IMR-90 (cell line): ENCODE measurements at regions of chr10 and their contacts with region 1.

Region 1: DNA sequence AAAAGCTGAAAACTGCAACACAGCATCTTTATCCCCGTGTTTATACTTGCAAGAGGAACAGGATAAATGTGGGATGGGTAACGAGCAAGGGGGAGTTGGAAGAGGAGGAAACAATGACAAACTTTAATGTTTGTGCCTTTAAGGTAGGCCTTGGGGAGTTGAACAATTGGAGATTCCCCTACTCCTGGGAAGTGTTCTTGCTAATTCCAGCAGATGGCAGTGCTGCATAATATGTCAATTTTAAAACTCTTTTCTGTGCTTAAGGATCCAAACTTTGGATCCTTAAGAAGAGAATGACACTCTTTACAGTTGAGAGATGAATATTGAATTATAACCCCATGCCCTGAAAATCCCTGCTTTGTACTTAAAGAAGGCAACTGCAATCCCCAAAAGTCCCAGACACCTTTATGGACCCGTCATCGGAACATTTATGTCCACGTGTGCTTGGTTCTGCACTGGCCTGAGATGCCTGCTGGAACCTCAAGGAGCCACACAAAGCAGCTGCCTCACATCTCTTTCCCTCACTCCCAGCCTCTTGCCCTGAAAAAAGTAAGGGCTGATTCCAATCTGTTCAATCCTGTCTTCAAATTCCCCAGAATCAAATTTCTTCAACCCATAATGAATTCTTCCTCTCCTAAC is 12.0 kb downstream of the IFIT5 start:
- DNase-seq: peak; percentile 75
- ATAC-seq: peak; percentile 77
- H3K4me3 ChIP-seq: no peak overlapping the region
- H3K27ac ChIP-seq: no peak overlapping the region
- H3K4me1 ChIP-seq: peaks cover 15% of the 10 kb centered on the region
- H3K27me3 ChIP-seq: no peaks in the 10 kb centered on the region
- CTCF ChIP-seq: peak; percentile 89
- POLR2A ChIP-seq: no peak
- RAD21 ChIP-seq: peak; percentile 92

Region 2: DNA sequence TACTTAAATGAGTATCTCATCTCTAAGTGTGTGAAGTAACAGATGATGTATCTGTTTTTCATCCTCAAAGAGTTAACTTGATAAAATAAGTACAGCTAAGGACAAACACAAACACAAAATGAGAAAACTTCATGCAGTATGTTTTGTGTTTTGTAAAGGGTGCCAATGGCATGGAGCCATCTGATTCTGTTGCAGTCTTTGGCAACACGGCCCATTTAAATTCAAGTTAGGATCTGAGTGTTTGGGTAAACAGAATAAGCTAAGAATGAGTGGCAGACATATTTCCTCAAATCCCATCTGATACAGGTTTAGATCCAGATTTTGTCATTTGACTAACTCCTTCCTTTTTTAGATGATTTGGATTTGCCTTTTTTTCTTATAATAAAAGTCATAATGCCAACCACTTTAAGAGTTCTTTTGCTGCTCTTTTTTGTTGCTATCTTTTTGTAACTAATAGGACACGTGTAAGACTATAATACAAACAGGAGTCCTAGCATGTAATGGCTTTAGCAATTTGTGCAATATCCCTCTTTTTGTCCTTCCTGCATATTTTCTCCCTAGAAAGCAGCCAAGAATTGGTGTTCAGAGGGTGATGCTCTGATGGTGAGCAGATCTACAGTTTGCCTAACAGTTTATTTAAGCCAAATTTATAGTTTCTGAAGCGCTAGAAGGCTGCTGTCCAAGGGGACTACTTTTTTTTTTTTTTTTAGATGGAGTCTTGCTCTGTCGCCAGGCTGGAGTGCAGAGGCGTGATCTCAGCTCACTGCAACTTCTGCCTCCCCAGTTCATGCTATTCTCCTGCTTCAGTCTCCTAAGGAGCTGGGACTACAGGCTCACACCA is 454.9 kb before region 1 on chr10:
- CTCF ChIA-PET with region 1: no interaction called
- POLR2A ChIA-PET with region 1: no interaction called
- dilution Hi-C with region 1: no loop called
- in situ Hi-C with region 1: no loop called
- intact Hi-C with region 1: no loop called
- DNase-seq: peak; percentile 28
- ATAC-seq: peak; percentile 38
- H3K4me3 ChIP-seq: no peak overlapping the region
- H3K27ac ChIP-seq: no peak overlapping the region
- H3K4me1 ChIP-seq: peaks cover 7% of the 10 kb centered on the region
- H3K27me3 ChIP-seq: no peaks in the 10 kb centered on the region
- CTCF ChIP-seq: no peak
- POLR2A ChIP-seq: no peak
- RAD21 ChIP-seq: no peak

Region 3: DNA sequence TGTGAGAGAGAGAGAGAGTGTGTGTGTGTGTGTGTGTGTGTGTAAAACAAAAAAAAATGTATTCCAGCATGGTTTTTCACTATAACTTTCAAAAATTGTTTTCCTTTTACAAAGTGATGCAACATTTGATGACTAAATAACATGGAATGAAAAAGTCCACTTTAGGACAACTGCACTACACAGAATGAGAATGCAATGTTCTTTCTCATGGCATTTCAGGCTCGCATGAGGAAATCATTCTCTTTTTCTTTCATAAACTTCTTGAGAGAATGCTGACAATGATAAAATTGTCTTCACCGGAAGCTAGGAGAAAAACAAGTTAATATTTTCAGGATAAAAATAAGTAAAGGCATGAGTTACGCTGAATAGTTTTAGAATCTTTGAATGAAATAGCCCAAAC is 55.3 kb after region 1 on chr10:
- CTCF ChIA-PET with region 1: interaction called, 4 read pairs
- POLR2A ChIA-PET with region 1: no interaction called
- dilution Hi-C with region 1: no loop called
- in situ Hi-C with region 1: no loop called
- intact Hi-C with region 1: loop called (anchors 2 kb)
- DNase-seq: peak; percentile 93
- ATAC-seq: peak; percentile 79
- H3K4me3 ChIP-seq: no peak overlapping the region
- H3K27ac ChIP-seq: peak overlapping the region; percentile 24; the same call in 1 of the 2 replicates
- H3K4me1 ChIP-seq: peaks cover 12% of the 10 kb centered on the region
- H3K27me3 ChIP-seq: no peaks in the 10 kb centered on the region
- CTCF ChIP-seq: no peak
- POLR2A ChIP-seq: no peak
- RAD21 ChIP-seq: no peak

Region 4: DNA sequence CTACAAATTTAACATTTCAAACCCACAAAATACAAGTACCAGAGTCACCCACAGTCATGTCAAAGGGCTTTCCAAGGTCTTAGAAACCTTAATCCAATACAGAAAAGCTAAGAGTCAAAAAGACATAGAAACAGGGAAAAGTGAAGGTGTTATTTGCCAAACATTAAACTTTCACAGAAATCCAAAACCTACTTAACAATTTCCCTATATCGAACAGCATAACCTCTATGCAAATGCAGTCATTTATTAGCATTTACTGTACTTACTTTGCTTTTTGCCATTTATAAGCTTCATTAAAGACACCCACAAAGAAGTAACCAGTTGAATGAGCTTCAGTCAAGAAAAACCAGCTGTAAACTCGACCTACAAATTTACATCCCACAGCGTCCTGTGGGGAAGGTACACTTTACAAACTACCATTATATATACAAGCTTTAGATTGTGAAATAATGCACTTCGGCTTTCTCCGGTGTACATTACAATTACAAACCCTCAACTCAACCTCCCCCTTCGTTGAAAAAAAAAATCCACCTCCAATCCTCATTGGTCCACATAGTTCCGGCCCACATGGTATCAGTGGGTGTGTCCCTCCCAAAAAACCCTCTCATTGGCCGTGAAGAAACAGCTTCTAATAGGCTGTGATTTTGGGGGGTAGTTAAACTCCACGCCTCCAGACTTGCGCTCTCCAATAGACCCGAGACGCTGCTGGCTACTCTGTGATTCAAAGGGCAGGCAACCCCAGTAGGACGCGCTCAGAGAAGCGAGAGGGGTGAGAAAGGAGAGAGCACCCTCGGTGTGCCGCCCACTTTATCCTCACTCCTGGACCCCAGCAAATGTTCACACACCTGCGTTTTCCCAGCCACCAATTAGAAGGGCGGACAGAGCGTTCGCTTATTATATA is 217.3 kb after region 1 on chr10:
- CTCF ChIA-PET with region 1: no interaction called
- POLR2A ChIA-PET with region 1: no interaction called
- dilution Hi-C with region 1: no loop called
- in situ Hi-C with region 1: no loop called
- intact Hi-C with region 1: loop called (anchors 2 kb)
- DNase-seq: peak; percentile 96
- ATAC-seq: peak; percentile 89
- H3K4me3 ChIP-seq: peak overlapping the region; percentile 58
- H3K27ac ChIP-seq: peak overlapping the region; percentile 69
- H3K4me1 ChIP-seq: peaks cover 2% of the 10 kb centered on the region; the same call in 1 of the 2 replicates
- H3K27me3 ChIP-seq: no peaks in the 10 kb centered on the region
- CTCF ChIP-seq: no peak
- POLR2A ChIP-seq: peak; percentile 87
- RAD21 ChIP-seq: no peak

Region 5: GRCh38 chr10:89793649-89794254 is 367.4 kb after region 1 on chr10:
- CTCF ChIA-PET with region 1: no interaction called
- POLR2A ChIA-PET with region 1: no interaction called
- dilution Hi-C with region 1: no loop called
- in situ Hi-C with region 1: no loop called
- intact Hi-C with region 1: loop called (anchors 2 kb)
- DNase-seq: peak; percentile 74
- ATAC-seq: peak; percentile 92
- H3K4me3 ChIP-seq: no peak overlapping the region
- H3K27ac ChIP-seq: no peak overlapping the region
- H3K4me1 ChIP-seq: no peaks in the 10 kb centered on the region
- H3K27me3 ChIP-seq: no peaks in the 10 kb centered on the region
- CTCF ChIP-seq: peak; percentile 81
- POLR2A ChIP-seq: no peak
- RAD21 ChIP-seq: peak; percentile 90

Region 6: GRCh38 chr10:90579602-90580242 is 1153.4 kb after region 1 on chr10:
- CTCF ChIA-PET with region 1: no interaction called
- POLR2A ChIA-PET with region 1: no interaction called
- dilution Hi-C with region 1: no loop called
- in situ Hi-C with region 1: loop called (anchors 10 kb)
- intact Hi-C with region 1: no loop called
- DNase-seq: peak; percentile 52
- ATAC-seq: peak; percentile 72
- H3K4me3 ChIP-seq: no peak overlapping the region
- H3K27ac ChIP-seq: no peak overlapping the region
- H3K4me1 ChIP-seq: peaks cover 2% of the 10 kb centered on the region; the same call in 1 of the 2 replicates
- H3K27me3 ChIP-seq: peaks cover 2% of the 10 kb centered on the region
- CTCF ChIP-seq: peak; percentile 28
- POLR2A ChIP-seq: no peak
- RAD21 ChIP-seq: peak; percentile 35

Region 7: GRCh38 chr10:90862908-90863514 is 1436.7 kb after region 1 on chr10:
- CTCF ChIA-PET with region 1: no interaction called
- POLR2A ChIA-PET with region 1: no interaction called
- dilution Hi-C with region 1: no loop called
- in situ Hi-C with region 1: loop called (anchors 25 kb)
- intact Hi-C with region 1: loop called (anchors 10 kb)
- DNase-seq: peak; percentile 47
- ATAC-seq: peak; percentile 30; the same call in 1 of the 2 replicates
- H3K4me3 ChIP-seq: no peak overlapping the region
- H3K27ac ChIP-seq: no peak overlapping the region
- H3K4me1 ChIP-seq: no peaks in the 10 kb centered on the region
- H3K27me3 ChIP-seq: peaks cover 21% of the 10 kb centered on the region
- CTCF ChIP-seq: peak; percentile 89
- POLR2A ChIP-seq: no peak
- RAD21 ChIP-seq: peak; percentile 83